CD8-positive, alpha-beta T cell (primary cell): ENCODE measurements at regions of chr1 and their contacts with region 1.

Region 1: GRCh38 chr1:206556750-206557635 is 49.7 kb downstream of the RASSF5 start:
- DNase-seq: peak; percentile 72 to 95 (median 92)
- ATAC-seq: peak; percentile 64
- H3K4me3 ChIP-seq: peak overlapping the region; percentile 82 to 94
- H3K4me3 Mint-ChIP-seq: peak overlapping the region; percentile 95
- H3K27ac ChIP-seq: peak overlapping the region; percentile 81
- H3K27ac Mint-ChIP-seq: peak overlapping the region; percentile 95
- H3K4me1 ChIP-seq: peaks cover 69% of the 10 kb centered on the region
- H3K4me1 Mint-ChIP-seq: peaks cover 79% of the 10 kb centered on the region
- H3K27me3 ChIP-seq: no peaks in the 10 kb centered on the region
- H3K27me3 Mint-ChIP-seq: no peaks in the 10 kb centered on the region
- CTCF ChIP-seq: no peak

Region 2: GRCh38 chr1:205485338-205486228 is 1071.4 kb before region 1 on chr1:
- CTCF ChIA-PET with region 1: no interaction called
- POLR2A ChIA-PET with region 1: no interaction called
- intact Hi-C with region 1: no loop called
- DNase-seq: peak; percentile 39 to 88 (median 68)
- ATAC-seq: peak; percentile 65
- H3K4me3 ChIP-seq: no peak overlapping the region
- H3K4me3 Mint-ChIP-seq: no peak overlapping the region
- H3K27ac ChIP-seq: no peak overlapping the region
- H3K27ac Mint-ChIP-seq: no peak overlapping the region
- H3K4me1 ChIP-seq: peaks cover 19% of the 10 kb centered on the region
- H3K4me1 Mint-ChIP-seq: peaks cover 39% of the 10 kb centered on the region
- H3K27me3 ChIP-seq: no peaks in the 10 kb centered on the region
- H3K27me3 Mint-ChIP-seq: peaks cover 32% of the 10 kb centered on the region
- CTCF ChIP-seq: peak; percentile 81

Region 3: GRCh38 chr1:206507284-206508129 is 49.5 kb before region 1 on chr1 and contains the start of gene RASSF5:
- CTCF ChIA-PET with region 1: no interaction called
- POLR2A ChIA-PET with region 1: interaction called, 3 read pairs
- intact Hi-C with region 1: loop called in 1 of 2 experiments (anchors 5 kb)
- DNase-seq: peak; percentile 60 to 88 (median 77)
- ATAC-seq: peak; percentile 89
- H3K4me3 ChIP-seq: peak within 1 kb of the TSS; percentile 58 to 62
- H3K4me3 Mint-ChIP-seq: peak within 1 kb of the TSS; percentile 84
- H3K27ac ChIP-seq: no peak within 1 kb of the TSS
- H3K27ac Mint-ChIP-seq: no peak within 1 kb of the TSS
- H3K4me1 ChIP-seq: peaks cover 9% of the 10 kb centered on the region
- H3K4me1 Mint-ChIP-seq: peaks cover 46% of the 10 kb centered on the region
- H3K27me3 ChIP-seq: peaks cover 0 to 4% of the 10 kb centered on the region in 2 experiments
- H3K27me3 Mint-ChIP-seq: peaks cover 22% of the 10 kb centered on the region
- CTCF ChIP-seq: no peak
- total RNA-seq, gene RASSF5: 209 to 213 TPM

Region 4: DNA sequence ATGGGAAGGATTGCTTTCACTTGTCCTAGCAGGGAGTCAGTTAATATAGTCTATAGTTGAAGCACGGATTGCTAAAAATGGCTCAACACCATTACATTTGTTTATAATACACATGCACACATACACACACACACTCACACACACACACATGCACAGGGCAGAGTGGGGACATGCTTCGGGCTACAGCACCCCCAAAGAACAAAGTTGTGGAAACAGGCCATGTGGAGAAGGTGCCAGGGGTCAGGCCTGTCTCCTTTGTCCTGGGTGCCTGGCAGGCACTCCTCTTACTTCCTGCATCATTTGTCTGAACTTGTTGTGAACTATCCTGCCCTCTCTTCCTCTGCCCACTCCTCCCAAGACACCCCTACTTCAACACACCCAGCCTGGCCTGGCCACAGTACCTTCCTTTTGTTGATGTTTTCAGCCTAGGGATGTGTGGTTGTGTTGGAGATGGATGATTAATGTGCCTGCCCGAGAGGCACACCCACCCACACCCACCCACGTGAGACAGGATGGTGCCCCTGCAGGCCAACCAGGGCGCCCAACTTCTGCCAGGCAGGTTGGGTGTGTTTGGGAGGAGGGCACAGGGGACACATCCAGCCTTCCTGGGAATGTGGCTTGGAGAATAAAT is 32.1 kb before region 1 on chr1:
- CTCF ChIA-PET with region 1: no interaction called
- POLR2A ChIA-PET with region 1: no interaction called
- intact Hi-C with region 1: no loop called
- DNase-seq: no peak
- ATAC-seq: no peak
- H3K4me3 ChIP-seq: no peak overlapping the region
- H3K4me3 Mint-ChIP-seq: no peak overlapping the region
- H3K27ac ChIP-seq: no peak overlapping the region
- H3K27ac Mint-ChIP-seq: no peak overlapping the region
- H3K4me1 ChIP-seq: no peaks in the 10 kb centered on the region
- H3K4me1 Mint-ChIP-seq: no peaks in the 10 kb centered on the region
- H3K27me3 ChIP-seq: no peaks in the 10 kb centered on the region
- H3K27me3 Mint-ChIP-seq: no peaks in the 10 kb centered on the region
- CTCF ChIP-seq: no peak

Region 5: DNA sequence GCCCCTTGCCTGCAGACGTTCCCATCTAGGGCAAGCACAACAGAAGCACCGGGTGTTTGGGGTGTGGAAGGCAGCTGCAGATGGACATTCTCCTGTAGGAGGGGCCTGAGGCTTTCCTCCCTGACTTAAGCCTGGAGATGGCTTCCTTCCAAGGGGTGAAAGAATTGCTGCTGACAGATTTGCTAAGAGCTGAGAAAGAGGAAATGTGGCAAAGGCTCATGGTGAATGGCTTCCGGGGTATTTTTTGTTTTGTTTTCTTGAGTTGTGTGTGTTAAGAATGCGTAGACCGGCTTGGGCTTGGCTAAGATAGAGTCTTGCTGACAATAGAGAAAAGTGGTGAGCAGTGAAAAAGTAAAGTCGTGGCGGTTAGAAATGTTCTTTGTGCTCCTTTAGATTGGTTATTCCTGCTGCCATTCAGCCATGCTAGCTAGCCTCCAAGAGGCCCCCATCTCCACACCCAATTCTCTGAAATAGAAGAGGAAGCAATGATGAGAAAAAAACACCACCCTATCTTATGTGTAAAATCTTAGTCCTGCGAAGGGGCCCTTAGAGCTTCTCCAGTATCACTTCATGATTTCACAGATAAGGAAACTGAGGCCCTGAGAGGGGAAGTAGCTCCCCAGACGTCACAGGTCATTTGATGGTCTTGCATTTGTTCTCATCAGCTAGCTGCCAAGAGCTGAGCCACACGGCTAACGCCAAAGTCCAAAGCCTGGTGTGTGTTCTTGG is 18.3 kb after region 1 on chr1:
- CTCF ChIA-PET with region 1: interaction called, 709 read pairs
- POLR2A ChIA-PET with region 1: interaction called, 320 read pairs
- intact Hi-C with region 1: loop called (anchors 1 kb)
- DNase-seq: peak in 6 of 9 experiments; percentile 49 to 90 (median 70)
- ATAC-seq: peak; percentile 55
- H3K4me3 ChIP-seq: peak overlapping the region; percentile 27 to 32
- H3K4me3 Mint-ChIP-seq: peak overlapping the region; percentile 71
- H3K27ac ChIP-seq: peak overlapping the region; percentile 59 to 95
- H3K27ac Mint-ChIP-seq: peak overlapping the region; percentile 96
- H3K4me1 ChIP-seq: peaks cover 98% of the 10 kb centered on the region
- H3K4me1 Mint-ChIP-seq: peaks cover 95% of the 10 kb centered on the region
- H3K27me3 ChIP-seq: no peaks in the 10 kb centered on the region
- H3K27me3 Mint-ChIP-seq: no peaks in the 10 kb centered on the region
- CTCF ChIP-seq: no peak